Activated CD4-positive, alpha-beta memory T cell treated with anti-CD3 and anti-CD28 coated beads for 36 hours (primary cell): ENCODE measurements at regions of chr6 and their contacts with region 1.

Region 1: DNA sequence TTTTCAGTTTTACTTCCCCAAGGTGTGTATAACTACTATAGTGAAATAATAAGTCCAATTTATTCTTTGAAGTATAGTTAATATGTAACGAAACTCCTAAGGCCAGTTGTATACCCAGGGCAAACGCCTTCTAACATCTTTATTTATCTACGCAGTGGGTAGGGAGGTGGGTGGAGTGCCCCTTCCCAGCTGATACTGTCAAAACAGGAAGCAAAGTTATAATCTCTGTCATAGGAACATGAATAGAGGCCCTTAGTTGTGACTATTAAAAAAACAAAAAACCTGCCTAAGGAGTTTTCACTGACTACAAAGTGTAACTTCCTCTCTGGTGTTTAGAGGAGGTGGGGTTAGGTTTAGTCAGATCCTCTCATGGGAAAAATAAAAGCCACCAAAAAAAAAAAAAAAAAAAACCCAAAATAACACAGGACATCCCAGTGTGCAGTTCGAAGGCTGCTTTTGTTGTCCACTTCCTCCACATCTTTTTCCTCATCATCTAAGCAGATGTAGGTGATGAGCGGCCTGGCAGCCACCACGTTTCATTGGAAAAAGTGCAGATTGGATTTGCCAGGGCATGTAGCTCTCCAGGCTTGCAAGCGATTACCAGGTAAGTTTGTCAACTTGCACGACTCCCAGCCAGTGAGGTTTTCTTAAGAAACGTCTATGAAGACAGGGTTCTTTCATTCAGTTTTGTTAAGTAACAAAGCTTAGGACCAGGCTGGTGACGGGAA is 58.7 kb downstream of the UTRN start:
- DNase-seq: peak; percentile 53
- H3K4me3 Mint-ChIP-seq: peak overlapping the region; percentile 95
- H3K27ac Mint-ChIP-seq: peak overlapping the region; percentile 99
- H3K4me1 Mint-ChIP-seq: peaks cover 67% of the 10 kb centered on the region
- H3K27me3 Mint-ChIP-seq: no peaks in the 10 kb centered on the region

Region 2: DNA sequence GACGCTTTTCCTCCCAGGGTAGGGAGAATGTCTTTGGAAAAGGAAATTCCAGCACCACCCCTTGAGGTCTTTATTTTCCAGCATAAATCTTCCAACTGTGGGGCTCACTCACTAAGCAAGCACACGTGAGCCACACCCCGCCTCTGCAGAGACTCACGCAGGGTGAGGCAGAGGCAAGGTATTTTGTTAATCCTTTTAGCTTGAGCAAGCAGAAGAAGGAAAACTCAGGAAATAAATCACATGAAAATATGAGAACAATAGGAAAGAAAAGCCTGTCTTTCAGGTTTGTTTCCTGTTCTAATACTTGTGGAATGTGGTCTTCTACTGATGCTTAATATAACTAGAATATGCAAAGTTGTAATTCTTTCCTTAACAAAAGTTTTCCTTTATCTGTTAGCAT is 670.2 kb before region 1 on chr6:
- CTCF ChIA-PET with region 1: no interaction called
- POLR2A ChIA-PET with region 1: no interaction called
- intact Hi-C with region 1: no loop called
- DNase-seq: no peak
- H3K4me3 Mint-ChIP-seq: no peak overlapping the region
- H3K27ac Mint-ChIP-seq: no peak overlapping the region
- H3K4me1 Mint-ChIP-seq: peaks cover 24% of the 10 kb centered on the region
- H3K27me3 Mint-ChIP-seq: no peaks in the 10 kb centered on the region

Region 3: DNA sequence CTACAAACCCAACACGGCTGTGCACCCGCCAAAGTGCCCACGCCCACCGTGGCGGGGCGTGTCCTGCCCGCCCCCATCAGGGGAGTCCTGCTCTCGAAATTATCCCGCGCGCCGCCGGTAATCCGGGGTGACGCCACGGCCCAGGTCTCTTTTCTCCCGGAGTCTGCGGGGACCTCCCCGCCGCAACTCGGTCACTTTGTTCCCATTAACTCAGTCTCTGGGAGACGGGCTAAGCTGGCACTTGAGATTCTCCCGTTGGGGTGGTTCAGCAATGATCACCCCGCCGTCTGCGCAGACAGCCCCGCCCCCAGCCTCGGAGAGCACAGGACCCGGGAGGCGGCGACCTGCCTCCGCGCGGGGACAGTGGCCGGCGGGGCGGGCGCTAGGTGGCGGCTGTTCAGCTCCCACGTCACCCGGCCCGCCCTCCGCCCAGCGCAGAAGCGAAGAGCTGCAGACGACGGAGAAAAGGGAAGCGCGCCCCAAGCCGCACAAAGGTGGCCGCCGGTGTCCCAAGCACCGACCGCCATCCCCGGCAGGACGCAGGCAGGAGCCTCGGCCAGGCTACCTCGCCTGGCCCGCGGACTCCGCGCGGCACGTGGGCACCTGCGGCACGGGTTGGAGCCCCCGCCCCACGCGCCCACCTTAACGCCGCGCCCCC is 280.0 kb before region 1 on chr6:
- CTCF ChIA-PET with region 1: interaction called, 3 read pairs
- POLR2A ChIA-PET with region 1: no interaction called
- intact Hi-C with region 1: loop called (anchors 2 kb)
- DNase-seq: peak; percentile 91
- H3K4me3 Mint-ChIP-seq: peak overlapping the region; percentile 82
- H3K27ac Mint-ChIP-seq: peak overlapping the region; percentile 67
- H3K4me1 Mint-ChIP-seq: peaks cover 43% of the 10 kb centered on the region
- H3K27me3 Mint-ChIP-seq: no peaks in the 10 kb centered on the region

Region 4: GRCh38 chr6:144149891-144150709 is 193.8 kb before region 1 on chr6 and contains the start of gene STX11:
- CTCF ChIA-PET with region 1: no interaction called
- POLR2A ChIA-PET with region 1: no interaction called
- intact Hi-C with region 1: loop called (anchors 1 kb)
- DNase-seq: peak; percentile 88
- H3K4me3 Mint-ChIP-seq: peak within 1 kb of the TSS; percentile 88
- H3K27ac Mint-ChIP-seq: peak within 1 kb of the TSS; percentile 98
- H3K4me1 Mint-ChIP-seq: peaks cover 41% of the 10 kb centered on the region
- H3K27me3 Mint-ChIP-seq: no peaks in the 10 kb centered on the region
- total RNA-seq, gene STX11: 16.0 to 16.6 TPM

Region 5: GRCh38 chr6:144190593-144190992 is 153.3 kb before region 1 on chr6:
- CTCF ChIA-PET with region 1: no interaction called
- POLR2A ChIA-PET with region 1: no interaction called
- intact Hi-C with region 1: no loop called
- DNase-seq: no peak
- H3K4me3 Mint-ChIP-seq: no peak overlapping the region
- H3K27ac Mint-ChIP-seq: no peak overlapping the region
- H3K4me1 Mint-ChIP-seq: peaks cover 2% of the 10 kb centered on the region
- H3K27me3 Mint-ChIP-seq: no peaks in the 10 kb centered on the region

Region 6: DNA sequence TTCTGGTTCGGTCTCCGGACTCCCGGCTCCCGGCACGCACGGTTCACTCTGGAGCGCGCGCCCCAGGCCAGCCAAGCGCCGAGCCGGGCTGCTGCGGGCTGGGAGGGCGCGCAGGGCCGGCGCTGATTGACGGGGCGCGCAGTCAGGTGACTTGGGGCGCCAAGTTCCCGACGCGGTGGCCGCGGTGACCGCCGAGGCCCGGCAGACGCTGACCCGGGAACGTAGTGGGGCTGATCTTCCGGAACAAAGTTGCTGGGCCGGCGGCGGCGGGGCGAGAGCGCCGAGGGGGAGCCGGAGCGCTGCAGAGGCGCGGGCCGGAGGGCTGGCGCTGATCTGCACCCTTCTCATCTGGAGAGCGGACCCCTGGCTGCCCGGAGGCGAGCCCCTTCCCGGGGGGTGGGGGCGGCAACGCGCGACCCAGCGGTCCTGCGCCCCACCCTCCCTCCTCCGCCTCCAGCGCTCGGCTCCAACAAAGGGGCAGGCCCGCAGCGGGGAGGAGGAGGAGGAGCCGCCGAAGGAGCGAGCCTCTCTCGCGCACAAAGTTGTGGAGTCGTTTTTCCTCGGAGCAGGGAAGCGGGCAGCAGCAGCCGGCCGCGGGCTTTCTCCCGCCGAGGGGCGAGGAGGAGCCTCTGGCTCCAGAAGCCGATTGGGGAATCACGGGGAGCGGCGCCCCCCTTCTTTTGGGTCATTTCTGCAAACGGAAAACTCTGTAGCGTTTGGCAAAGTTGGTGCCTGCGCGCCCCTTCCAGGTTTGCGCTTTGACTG is 58.9 kb before region 1 on chr6 and contains the start of gene UTRN:
- CTCF ChIA-PET with region 1: interaction called, 4 read pairs
- POLR2A ChIA-PET with region 1: no interaction called
- intact Hi-C with region 1: loop called (anchors 1 kb)
- DNase-seq: peak; percentile 61
- H3K4me3 Mint-ChIP-seq: peak within 1 kb of the TSS; percentile 90
- H3K27ac Mint-ChIP-seq: peak within 1 kb of the TSS; percentile 73
- H3K4me1 Mint-ChIP-seq: peaks cover 16% of the 10 kb centered on the region
- H3K27me3 Mint-ChIP-seq: peaks cover 10% of the 10 kb centered on the region
- total RNA-seq, gene UTRN: 37.8 to 38.1 TPM

Region 7: GRCh38 chr6:144327081-144327480 is 16.8 kb before region 1 on chr6:
- CTCF ChIA-PET with region 1: no interaction called
- POLR2A ChIA-PET with region 1: no interaction called
- intact Hi-C with region 1: no loop called
- DNase-seq: no peak
- H3K4me3 Mint-ChIP-seq: no peak overlapping the region
- H3K27ac Mint-ChIP-seq: no peak overlapping the region
- H3K4me1 Mint-ChIP-seq: no peaks in the 10 kb centered on the region
- H3K27me3 Mint-ChIP-seq: no peaks in the 10 kb centered on the region

Region 8: GRCh38 chr6:144559865-144560593 is 216.2 kb after region 1 on chr6:
- CTCF ChIA-PET with region 1: no interaction called
- POLR2A ChIA-PET with region 1: no interaction called
- intact Hi-C with region 1: loop called (anchors 5 kb)
- DNase-seq: peak; percentile 45
- H3K4me3 Mint-ChIP-seq: peak overlapping the region; percentile 56
- H3K27ac Mint-ChIP-seq: peak overlapping the region; percentile 82
- H3K4me1 Mint-ChIP-seq: peaks cover 34% of the 10 kb centered on the region
- H3K27me3 Mint-ChIP-seq: no peaks in the 10 kb centered on the region